CD8-positive, alpha-beta memory T cell (primary cell): ENCODE measurements at regions of chr4 and their contacts with region 1.

Region 1: DNA sequence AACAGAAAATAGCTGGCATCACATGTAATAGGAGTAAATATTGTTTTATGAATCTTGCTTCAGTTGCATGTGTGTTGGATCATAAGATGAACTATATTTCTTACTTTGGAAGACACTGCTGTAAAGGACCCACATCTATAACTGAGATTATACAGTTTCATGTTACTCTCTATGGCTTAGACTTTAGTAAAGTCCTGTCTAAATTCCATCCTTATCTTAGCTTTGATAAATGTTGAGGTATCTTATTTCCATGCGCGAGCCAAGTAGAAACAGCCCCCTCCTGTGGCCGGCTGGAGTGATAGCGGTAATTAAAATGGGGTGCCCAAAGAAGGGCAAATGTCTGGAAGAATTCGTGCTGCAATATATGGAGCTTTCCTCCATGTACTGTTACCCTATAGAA is 43.0 kb downstream of the CCDC158 start:
- DNase-seq: peak; percentile 15 to 52 (median 23)
- H3K4me3 ChIP-seq: no peak overlapping the region
- H3K4me3 Mint-ChIP-seq: no peak overlapping the region
- H3K27ac ChIP-seq: no peak overlapping the region
- H3K27ac Mint-ChIP-seq: no peak overlapping the region
- H3K4me1 ChIP-seq: no peaks in the 10 kb centered on the region
- H3K4me1 Mint-ChIP-seq: peaks cover 1 to 7% (median 6%) of the 10 kb centered on the region in 3 donors
- H3K27me3 ChIP-seq: no peaks in the 10 kb centered on the region
- H3K27me3 Mint-ChIP-seq: peaks cover 4 to 9% of the 10 kb centered on the region in 2 donors

Region 2: DNA sequence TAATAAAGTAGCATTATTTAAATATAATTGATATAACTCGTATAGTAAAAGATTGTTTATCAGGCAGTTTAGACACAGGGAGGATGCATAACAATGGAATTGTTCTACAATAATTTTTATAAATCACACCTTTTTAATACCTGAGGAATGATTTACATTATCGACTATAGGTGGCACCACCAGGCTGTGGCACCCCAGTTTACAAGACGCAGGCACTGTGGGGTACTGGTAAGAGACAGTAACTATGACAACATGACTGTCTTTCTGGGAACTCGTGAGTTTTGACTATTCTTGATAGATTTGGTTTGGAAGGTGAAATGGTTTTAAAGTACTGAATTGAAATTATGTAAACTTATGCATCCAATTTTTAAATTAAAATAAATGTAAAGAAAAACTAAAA is 98.4 kb before region 1 on chr4:
- CTCF ChIA-PET with region 1: interaction called, 11 read pairs
- POLR2A ChIA-PET with region 1: no interaction called
- DNase-seq: peak in 1 of 5 donors; percentile 14
- H3K4me3 ChIP-seq: no peak overlapping the region
- H3K4me3 Mint-ChIP-seq: no peak overlapping the region
- H3K27ac ChIP-seq: no peak overlapping the region
- H3K27ac Mint-ChIP-seq: no peak overlapping the region
- H3K4me1 ChIP-seq: no peaks in the 10 kb centered on the region
- H3K4me1 Mint-ChIP-seq: peaks cover 0 to 9% (median 2%) of the 10 kb centered on the region in 3 donors
- H3K27me3 ChIP-seq: no peaks in the 10 kb centered on the region
- H3K27me3 Mint-ChIP-seq: peaks cover 10 to 20% of the 10 kb centered on the region in 2 donors

Region 3: DNA sequence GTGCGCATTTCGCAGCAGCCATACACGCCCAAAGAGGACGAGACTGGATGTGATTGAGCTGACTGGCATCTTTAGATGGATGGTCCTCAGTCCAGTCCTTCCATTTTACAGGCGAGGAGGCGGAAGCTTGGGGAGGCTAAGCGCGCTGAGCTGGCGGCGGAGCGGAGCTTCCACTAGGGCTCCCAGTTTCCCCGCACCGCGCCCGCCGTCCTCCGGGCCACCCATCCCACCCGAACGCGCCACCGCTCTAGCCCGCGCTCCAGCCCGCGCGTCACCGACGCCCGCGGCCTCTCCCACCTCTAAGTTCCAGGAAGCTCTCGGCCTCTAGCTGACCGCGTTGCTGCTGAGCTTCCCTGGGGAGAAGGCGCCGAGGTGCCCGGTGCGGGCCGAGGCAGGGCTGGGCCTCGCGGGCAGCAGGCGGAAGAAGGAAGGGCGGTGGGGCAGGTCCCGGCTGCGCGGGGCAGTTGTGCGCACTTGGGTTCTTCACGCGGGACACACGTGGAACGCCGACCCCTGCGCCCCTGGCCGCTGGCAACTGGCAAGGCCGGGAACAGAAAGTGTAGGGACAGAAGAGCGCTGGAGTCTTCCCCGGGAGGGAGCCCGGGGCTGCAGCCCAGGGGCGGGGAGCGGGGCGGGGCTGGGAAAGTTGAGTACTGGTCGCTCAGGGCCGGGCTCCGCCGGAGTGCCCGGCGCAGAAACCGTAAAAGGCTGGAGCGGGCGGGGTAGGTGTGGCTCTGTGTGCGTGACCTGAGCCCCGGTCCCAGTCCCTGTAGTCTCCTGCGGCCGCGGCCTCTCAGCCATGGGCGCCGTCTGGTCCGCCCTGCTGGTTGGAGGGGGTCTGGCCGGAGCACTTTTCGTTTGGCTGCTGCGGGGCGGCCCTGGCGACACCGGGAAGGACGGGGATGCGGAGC is 71.7 kb before region 1 on chr4 and contains the start of gene STBD1:
- CTCF ChIA-PET with region 1: interaction called, 12 read pairs
- POLR2A ChIA-PET with region 1: no interaction called
- DNase-seq: peak in 3 of 5 donors; percentile 12 to 31 (median 30)
- H3K4me3 ChIP-seq: peak within 1 kb of the TSS; percentile 51
- H3K4me3 Mint-ChIP-seq: peak within 1 kb of the TSS; percentile 77 to 91 (median 84)
- H3K27ac ChIP-seq: peak within 1 kb of the TSS; percentile 28
- H3K27ac Mint-ChIP-seq: peak within 1 kb of the TSS; percentile 15 to 83 (median 42)
- H3K4me1 ChIP-seq: peaks cover 21% of the 10 kb centered on the region
- H3K4me1 Mint-ChIP-seq: peaks cover 27 to 50% (median 37%) of the 10 kb centered on the region in 3 donors
- H3K27me3 ChIP-seq: no peaks in the 10 kb centered on the region
- H3K27me3 Mint-ChIP-seq: peaks cover 2 to 9% of the 10 kb centered on the region in 2 donors
- total RNA-seq, gene STBD1: 0.26 TPM in 1 of 2 experiments, not detected in the other